AG04450 (cell line): ENCODE measurements at regions of chr6 and their contacts with region 1.

Region 1: DNA sequence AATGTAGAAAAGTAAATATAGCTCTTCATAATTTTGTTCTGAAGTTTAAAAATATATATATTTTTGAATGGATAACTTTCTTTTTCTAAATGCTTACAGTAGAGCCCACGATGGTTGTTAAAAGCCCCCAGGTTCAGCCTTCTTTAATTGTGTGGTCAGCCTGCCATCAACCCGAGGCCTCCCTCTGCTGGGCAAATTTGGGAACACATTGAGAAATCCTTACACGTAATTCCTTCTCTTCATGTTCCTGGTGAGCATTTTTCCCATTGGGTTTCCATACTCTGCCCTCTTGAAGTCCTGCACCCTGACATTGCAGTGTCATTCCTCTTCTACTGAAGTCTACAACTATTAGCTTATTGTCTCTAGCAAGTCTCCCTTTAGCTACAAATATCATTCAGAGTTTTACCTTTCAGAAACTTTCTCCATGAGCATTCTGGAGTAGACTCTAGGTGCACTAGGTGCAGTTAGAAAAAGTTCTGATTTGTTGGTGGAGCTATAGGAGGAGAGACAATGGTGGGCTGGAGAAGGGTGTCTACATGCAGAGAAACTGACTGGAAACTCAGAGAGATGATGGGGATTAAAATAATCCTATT is 40.6 kb downstream of the TRIM38 start:
- DNase-seq: no peak
- H3K4me3 ChIP-seq: no peak overlapping the region
- H3K27ac ChIP-seq: no peak overlapping the region
- H3K27me3 ChIP-seq: no peaks in the 10 kb centered on the region
- CTCF ChIP-seq: peak; percentile 86

Region 2: GRCh38 chr6:25697537-25698345 is 305.5 kb before region 1 on chr6:
- CTCF ChIA-PET with region 1: no interaction called
- POLR2A ChIA-PET with region 1: no interaction called
- DNase-seq: no peak
- H3K4me3 ChIP-seq: no peak overlapping the region
- H3K27ac ChIP-seq: no peak overlapping the region
- H3K27me3 ChIP-seq: no peaks in the 10 kb centered on the region
- CTCF ChIP-seq: no peak

Region 3: DNA sequence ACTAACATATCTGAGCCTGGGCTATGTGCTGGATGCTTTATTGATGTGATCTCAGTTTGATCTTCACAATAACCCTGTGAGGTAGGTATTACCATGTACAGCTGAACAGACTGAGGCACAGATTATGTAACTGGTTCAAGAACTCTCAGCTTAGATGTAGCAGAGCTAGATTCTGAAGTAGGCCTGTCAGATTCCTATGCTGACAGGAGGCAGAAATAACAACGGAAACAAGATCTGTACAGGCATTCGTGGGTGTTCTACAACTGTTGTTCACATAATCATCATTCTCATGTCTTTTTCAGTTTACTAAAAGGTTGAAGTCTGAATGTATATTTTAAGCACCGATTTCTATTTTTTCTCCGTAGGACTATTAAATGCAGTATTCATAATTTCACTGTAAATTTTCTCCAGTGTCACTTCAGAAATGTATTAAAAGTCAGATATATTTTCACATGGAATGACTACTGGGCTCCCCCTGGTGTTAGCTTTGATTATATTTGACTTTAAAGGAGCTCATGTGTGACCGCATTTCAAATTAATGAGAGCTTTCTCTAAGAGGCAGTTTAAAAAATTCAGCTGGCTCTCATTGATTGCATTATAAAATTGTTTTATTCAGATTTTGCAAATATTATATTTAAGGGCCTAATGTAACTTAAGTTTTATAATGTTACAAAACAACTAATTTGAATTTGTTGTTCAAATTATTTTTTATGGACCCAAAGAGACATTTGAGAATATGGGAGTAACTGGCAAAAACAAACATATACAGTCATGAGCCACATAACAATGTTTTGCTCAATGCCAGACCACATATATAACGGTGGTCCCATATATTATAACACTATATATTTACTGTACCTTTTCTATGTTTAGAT is 285.1 kb before region 1 on chr6:
- CTCF ChIA-PET with region 1: interaction called, 59 read pairs
- POLR2A ChIA-PET with region 1: no interaction called
- DNase-seq: no peak
- H3K4me3 ChIP-seq: no peak overlapping the region
- H3K27ac ChIP-seq: no peak overlapping the region
- H3K27me3 ChIP-seq: no peaks in the 10 kb centered on the region
- CTCF ChIP-seq: peak; percentile 65

Region 4: DNA sequence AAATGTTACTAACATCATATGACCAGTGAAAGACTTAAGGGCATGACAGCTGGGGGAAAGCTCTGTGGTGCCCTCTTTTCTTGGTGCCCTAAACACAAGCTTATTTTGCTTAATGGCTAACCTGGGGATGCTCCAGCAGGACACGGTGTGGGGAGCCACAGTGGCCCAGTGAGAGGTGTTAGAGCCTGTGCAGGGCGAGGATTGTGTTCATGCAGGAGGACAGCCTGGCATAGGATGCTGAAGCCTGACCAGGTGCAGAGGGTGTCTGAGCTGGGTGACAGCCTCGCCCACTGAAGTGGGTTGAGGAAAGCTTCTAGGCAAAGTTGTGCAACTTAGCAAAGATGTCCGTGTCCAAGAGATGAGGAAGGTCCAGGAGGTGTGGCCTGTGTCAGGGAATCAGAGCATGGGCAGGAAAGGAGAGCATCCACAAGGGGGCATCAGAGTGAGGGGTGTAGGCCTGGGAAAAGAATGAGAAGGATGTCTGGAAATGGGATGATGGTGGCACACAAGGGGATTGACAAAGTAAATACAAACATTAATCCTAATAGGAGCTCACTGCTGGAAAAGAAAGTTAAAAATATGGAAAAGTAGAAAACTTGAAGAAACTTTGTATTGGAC is 214.8 kb before region 1 on chr6:
- CTCF ChIA-PET with region 1: interaction called, 61 read pairs
- POLR2A ChIA-PET with region 1: no interaction called
- DNase-seq: peak; percentile 13
- H3K4me3 ChIP-seq: no peak overlapping the region
- H3K27ac ChIP-seq: no peak overlapping the region
- H3K27me3 ChIP-seq: no peaks in the 10 kb centered on the region
- CTCF ChIP-seq: peak; percentile 62

Region 5: DNA sequence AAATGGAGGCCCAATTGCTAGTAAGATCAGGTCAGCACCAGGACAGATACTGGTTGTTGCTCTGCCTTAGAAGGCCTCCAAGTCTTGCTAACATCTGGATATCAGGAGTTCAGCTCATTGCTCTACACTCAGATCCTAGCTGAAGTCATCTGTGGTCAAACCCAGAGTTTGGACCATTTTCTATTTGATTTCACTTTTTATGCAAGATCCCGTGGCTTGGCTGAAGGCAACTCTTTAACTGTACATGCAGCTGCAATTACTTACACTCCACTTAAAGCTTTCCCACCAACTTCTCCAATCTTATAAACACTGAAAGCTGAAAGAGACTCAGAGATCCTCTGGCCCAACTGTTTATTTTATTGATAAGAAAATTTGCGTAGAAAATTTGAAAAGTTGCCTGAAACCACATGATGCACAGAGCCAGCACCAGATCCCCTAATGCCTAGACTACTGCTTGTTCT is 75.4 kb before region 1 on chr6:
- CTCF ChIA-PET with region 1: no interaction called
- POLR2A ChIA-PET with region 1: no interaction called
- DNase-seq: no peak
- H3K4me3 ChIP-seq: no peak overlapping the region
- H3K27ac ChIP-seq: no peak overlapping the region
- H3K27me3 ChIP-seq: no peaks in the 10 kb centered on the region
- CTCF ChIP-seq: no peak

Region 6: DNA sequence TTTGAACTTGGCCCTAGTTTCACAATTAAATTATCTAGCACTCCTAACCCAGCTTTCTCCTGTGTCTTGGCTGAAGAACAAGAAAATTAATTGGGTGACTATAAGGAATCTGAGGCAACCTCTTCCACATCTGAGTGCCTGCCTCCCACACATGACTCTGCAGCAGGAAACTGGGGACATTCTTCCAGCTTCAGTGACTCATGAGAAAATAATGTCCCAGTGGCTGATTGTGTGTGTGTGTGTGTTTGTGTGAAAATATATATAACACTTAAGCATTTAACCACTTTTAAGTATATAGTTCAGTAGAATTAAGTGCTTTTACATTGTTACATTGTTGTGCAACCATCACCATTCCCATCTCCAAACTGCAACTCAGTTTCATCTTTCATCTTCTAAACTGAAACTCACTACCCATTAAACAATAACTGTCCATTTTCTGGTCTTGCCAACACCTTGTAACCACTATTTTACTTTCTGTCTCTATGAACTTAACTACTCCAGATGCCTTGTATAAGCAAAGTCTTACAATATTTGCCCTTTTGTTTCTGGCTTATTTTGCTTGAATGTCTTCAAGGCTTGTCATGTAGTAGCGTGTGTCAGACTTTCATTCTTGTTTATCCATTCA is 31.9 kb before region 1 on chr6:
- CTCF ChIA-PET with region 1: interaction called, 27 read pairs
- POLR2A ChIA-PET with region 1: no interaction called
- DNase-seq: peak; percentile 59
- H3K4me3 ChIP-seq: no peak overlapping the region
- H3K27ac ChIP-seq: no peak overlapping the region
- H3K27me3 ChIP-seq: no peaks in the 10 kb centered on the region
- CTCF ChIP-seq: no peak

Region 7: GRCh38 chr6:25981568-25982263 is 21.5 kb before region 1 on chr6:
- CTCF ChIA-PET with region 1: interaction called, 33 read pairs
- POLR2A ChIA-PET with region 1: no interaction called
- DNase-seq: no peak
- H3K4me3 ChIP-seq: no peak overlapping the region
- H3K27ac ChIP-seq: no peak overlapping the region
- H3K27me3 ChIP-seq: no peaks in the 10 kb centered on the region
- CTCF ChIP-seq: no peak

Region 8: DNA sequence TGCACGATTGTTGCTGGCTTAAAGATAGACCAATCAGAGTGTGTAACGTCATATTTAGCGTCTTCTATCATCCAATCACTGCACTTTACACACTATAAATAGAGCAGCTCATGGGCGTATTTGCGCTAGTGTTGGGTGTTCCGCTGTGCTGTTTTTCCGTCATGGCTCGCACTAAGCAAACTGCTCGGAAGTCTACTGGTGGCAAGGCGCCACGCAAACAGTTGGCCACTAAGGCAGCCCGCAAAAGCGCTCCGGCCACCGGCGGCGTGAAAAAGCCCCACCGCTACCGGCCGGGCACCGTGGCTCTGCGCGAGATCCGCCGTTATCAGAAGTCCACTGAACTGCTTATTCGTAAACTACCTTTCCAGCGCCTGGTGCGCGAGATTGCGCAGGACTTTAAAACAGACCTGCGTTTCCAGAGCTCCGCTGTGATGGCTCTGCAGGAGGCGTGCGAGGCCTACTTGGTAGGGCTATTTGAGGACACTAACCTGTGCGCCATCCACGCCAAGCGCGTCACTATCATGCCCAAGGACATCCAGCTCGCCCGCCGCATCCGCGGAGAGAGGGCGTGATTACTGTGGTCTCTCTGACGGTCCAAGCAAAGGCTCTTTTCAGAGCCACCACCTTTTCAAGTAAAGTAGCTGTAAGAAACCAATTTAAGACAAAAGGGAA is 17.3 kb after region 1 on chr6:
- CTCF ChIA-PET with region 1: interaction called, 152 read pairs
- POLR2A ChIA-PET with region 1: interaction called, 13 read pairs
- DNase-seq: peak; percentile 86
- H3K4me3 ChIP-seq: peak overlapping the region; percentile 71
- H3K27ac ChIP-seq: peak overlapping the region; percentile 98
- H3K27me3 ChIP-seq: no peaks in the 10 kb centered on the region
- CTCF ChIP-seq: no peak

Region 9: DNA sequence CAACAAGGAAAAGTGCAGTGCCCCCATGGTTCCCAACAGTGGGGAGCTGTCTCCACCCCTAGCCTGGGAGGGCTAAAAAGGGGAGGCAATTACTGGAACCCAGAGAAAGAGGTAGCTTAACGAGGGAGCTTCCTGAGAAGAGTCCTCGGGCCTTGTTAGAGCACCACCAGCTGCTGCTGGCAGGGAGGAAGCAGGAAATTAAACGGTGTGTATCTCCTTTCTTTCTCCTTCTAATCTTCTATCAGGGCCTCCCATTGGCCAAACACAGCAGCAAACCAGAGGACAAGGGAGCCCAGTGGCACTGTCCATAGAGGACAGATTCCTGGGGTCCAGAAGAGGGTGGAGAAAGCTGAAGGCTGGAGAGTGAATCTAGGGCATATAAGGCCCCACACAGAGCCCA is 372.1 kb after region 1 on chr6:
- CTCF ChIA-PET with region 1: no interaction called
- POLR2A ChIA-PET with region 1: no interaction called
- DNase-seq: no peak
- H3K4me3 ChIP-seq: no peak overlapping the region
- H3K27ac ChIP-seq: no peak overlapping the region
- H3K27me3 ChIP-seq: no peaks in the 10 kb centered on the region
- CTCF ChIP-seq: no peak